Activated naive CD4-positive, alpha-beta T cell treated with anti-CD3 and anti-CD28 coated beads for 36 hours (primary cell): ENCODE measurements at regions of chr1 and their contacts with region 1.

Region 1: GRCh38 chr1:153946622-153947241 is at the start of gene DENND4B:
- DNase-seq: peak; percentile 71
- H3K4me3 Mint-ChIP-seq: peak within 1 kb of the TSS; percentile 92
- H3K27ac Mint-ChIP-seq: peak within 1 kb of the TSS; percentile 95
- H3K4me1 Mint-ChIP-seq: peaks cover 21% of the 10 kb centered on the region
- H3K27me3 Mint-ChIP-seq: no peaks in the 10 kb centered on the region
- total RNA-seq, gene DENND4B: 124 to 130 TPM

Region 2: GRCh38 chr1:152426731-152427130 is 1520.0 kb before region 1 on chr1:
- CTCF ChIA-PET with region 1: no interaction called
- intact Hi-C with region 1: no loop called
- DNase-seq: no peak
- H3K4me3 Mint-ChIP-seq: no peak overlapping the region
- H3K27ac Mint-ChIP-seq: no peak overlapping the region
- H3K4me1 Mint-ChIP-seq: no peaks in the 10 kb centered on the region
- H3K27me3 Mint-ChIP-seq: no peaks in the 10 kb centered on the region

Region 3: GRCh38 chr1:153796791-153797659 is 149.7 kb before region 1 on chr1:
- CTCF ChIA-PET with region 1: interaction called, 12 read pairs
- intact Hi-C with region 1: loop called (anchors 1 kb)
- DNase-seq: peak; percentile 95
- H3K4me3 Mint-ChIP-seq: no peak overlapping the region
- H3K27ac Mint-ChIP-seq: no peak overlapping the region
- H3K4me1 Mint-ChIP-seq: peaks cover 2% of the 10 kb centered on the region
- H3K27me3 Mint-ChIP-seq: no peaks in the 10 kb centered on the region

Region 4: DNA sequence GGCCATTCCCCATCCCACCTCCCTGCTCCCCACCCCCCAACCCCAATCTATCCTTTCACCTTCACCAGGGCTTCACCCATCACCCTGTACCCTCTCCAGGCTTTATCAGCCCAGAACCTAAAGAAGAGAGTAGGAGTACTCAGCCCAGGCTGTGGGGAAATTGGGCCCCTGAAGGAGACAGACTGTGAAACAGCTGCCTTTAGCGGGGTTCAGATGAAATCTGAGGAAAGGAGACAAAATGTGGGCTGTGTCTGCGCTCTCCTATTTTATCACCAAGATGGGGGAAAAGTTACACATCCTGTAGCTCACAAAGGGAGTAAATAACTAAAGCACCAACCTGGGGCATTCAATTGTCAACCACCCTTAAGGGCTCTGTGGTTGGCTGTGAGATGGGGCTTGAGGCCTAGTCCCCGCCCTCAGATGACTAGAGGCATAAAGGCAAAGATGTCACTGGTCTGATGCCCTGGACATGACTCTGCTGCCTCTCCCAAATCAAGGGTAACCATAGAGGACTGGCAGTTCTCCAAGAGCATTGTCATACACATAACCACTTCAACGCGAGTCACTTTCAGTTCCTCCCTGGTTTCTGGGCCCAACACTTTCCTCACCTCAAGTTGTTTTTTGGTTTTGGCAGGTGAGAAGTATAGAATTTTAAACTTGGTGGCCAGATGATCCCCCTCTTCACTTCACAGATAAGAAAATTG is 141.5 kb before region 1 on chr1:
- CTCF ChIA-PET with region 1: interaction called, 10 read pairs
- intact Hi-C with region 1: loop called (anchors 2 kb)
- DNase-seq: peak; percentile 88
- H3K4me3 Mint-ChIP-seq: peak overlapping the region; percentile 17
- H3K27ac Mint-ChIP-seq: peak overlapping the region; percentile 90
- H3K4me1 Mint-ChIP-seq: peaks cover 27% of the 10 kb centered on the region
- H3K27me3 Mint-ChIP-seq: no peaks in the 10 kb centered on the region

Region 5: DNA sequence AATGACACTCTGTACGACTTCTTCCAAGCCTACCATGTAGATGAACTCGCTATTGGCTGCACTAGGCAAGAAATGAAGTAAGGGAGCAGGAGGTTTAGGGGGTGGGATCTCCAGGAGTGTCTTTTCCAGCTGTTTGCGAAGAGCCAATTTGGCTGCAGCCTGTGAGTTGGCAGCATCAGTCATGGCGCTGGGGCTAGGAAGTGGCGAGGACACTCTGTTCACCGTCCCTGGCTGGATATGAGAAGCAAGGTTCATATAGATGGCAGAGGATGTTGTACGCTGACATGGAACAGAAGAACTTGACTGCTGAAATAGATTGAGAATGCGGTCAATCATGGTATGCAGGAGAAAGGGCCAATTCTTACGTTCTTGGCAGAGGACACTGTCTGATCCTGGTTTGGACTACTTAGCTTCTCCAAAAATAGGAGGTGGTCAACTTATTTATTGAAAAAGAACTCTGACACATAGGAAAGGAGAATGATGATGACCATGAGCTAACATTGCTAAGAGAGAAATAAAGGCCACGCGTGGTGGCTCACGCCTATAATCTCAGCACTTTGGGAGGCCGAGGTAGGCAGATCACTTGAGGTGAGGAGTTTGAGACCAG is 130.3 kb before region 1 on chr1:
- CTCF ChIA-PET with region 1: interaction called, 3 read pairs
- intact Hi-C with region 1: loop called (anchors 1 kb)
- DNase-seq: no peak
- H3K4me3 Mint-ChIP-seq: no peak overlapping the region
- H3K27ac Mint-ChIP-seq: no peak overlapping the region
- H3K4me1 Mint-ChIP-seq: no peaks in the 10 kb centered on the region
- H3K27me3 Mint-ChIP-seq: no peaks in the 10 kb centered on the region

Region 6: DNA sequence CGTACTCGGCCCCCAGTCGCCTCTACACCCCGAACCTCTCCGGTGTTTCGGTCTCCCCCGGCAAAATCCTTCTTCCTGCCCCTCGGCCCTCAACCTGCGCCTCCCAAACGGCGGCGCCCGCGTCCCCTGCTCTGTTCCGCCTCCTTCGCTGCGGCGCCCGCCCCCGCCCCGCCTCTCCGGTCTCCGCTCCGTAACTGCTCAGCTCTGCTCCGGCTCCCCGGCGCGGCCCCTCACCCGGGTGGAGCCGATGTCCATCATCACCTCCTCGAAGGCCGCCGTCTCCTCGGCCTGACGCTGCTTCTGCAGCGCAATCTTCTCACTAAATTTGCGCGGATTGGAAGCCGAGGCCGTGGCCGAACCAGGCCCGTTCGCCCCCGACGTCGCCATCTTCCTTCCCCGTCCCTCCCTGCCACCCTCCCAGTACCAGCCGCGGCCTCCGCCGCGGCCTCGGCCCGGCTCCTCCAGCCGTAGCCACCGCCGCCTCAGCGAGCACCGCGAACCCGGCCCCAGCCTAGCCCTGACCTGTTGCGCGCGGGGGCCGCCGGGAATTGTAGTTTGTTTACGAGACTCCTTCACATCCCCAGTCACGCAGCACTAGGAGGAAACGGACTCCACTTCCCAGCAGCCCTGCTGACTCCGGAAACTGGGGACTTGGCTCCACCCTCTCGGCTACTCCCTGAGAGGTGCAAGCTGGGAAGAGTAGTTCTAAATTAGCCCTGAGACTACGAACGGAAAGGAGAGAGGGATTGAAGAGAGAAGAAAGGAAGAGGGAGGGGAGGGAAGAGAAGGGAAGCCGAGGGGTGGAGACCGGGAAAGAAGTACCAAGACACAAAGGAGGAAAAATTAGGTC is 11.6 kb after region 1 on chr1 and contains the start of gene CRTC2:
- CTCF ChIA-PET with region 1: interaction called, 10 read pairs
- intact Hi-C with region 1: loop called (anchors 1 kb)
- DNase-seq: peak; percentile 99
- H3K4me3 Mint-ChIP-seq: peak within 1 kb of the TSS; percentile 86
- H3K27ac Mint-ChIP-seq: peak within 1 kb of the TSS; percentile 92
- H3K4me1 Mint-ChIP-seq: peaks cover 53% of the 10 kb centered on the region
- H3K27me3 Mint-ChIP-seq: no peaks in the 10 kb centered on the region
- total RNA-seq, gene CRTC2: 72.6 to 83.0 TPM

Region 7: GRCh38 chr1:153967082-153968000 is 20.6 kb after region 1 on chr1 and contains the start of gene CREB3L4:
- CTCF ChIA-PET with region 1: interaction called, 14 read pairs
- intact Hi-C with region 1: no loop called
- DNase-seq: peak; percentile 90
- H3K4me3 Mint-ChIP-seq: peak within 1 kb of the TSS; percentile 85
- H3K27ac Mint-ChIP-seq: peak within 1 kb of the TSS; percentile 94
- H3K4me1 Mint-ChIP-seq: peaks cover 42% of the 10 kb centered on the region
- H3K27me3 Mint-ChIP-seq: no peaks in the 10 kb centered on the region
- total RNA-seq, gene CREB3L4: 5.6 to 7.4 TPM